ENCODE measurements at regions of chrX and their contacts with region 1.

Region 1: DNA sequence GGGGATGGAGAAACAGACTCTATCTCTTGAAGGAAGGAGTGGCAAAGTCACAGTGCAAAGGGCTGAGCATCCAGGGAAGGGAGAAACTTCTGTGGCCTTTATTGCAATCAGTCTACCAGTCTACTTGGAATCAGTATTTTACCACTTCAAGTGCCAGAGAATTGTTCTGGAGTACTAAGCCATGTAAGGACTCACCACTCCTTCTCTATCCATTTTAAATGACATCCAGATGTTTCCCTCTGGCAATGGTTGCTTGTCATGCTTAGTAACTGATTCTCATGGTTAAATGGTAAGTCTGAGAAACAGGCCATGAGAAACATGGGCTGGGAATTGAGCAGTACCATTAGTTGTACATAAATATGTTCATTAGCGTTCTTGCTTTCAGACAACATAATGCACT is 21.1 kb upstream of the SMIM10 start:
- DNase-seq: no peak
- ATAC-seq: no peak
- H3K4me3 ChIP-seq: no peak overlapping the region
- H3K27ac ChIP-seq: no peak overlapping the region
- H3K4me1 ChIP-seq: no peaks in the 10 kb centered on the region
- H3K27me3 ChIP-seq: no peaks in the 10 kb centered on the region
- CTCF ChIP-seq: no peak

Region 2: GRCh38 chrX:134898440-134898839 is 71.3 kb before region 1 on chrX:
- CTCF ChIA-PET with region 1: no interaction called
- POLR2A ChIA-PET with region 1: no interaction called
- intact Hi-C with region 1: no loop called
- DNase-seq: peak; percentile 3
- ATAC-seq: no peak
- H3K4me3 ChIP-seq: no peak overlapping the region
- H3K27ac ChIP-seq: no peak overlapping the region
- H3K4me1 ChIP-seq: peaks cover 9% of the 10 kb centered on the region
- H3K27me3 ChIP-seq: no peaks in the 10 kb centered on the region
- CTCF ChIP-seq: no peak

Region 3: GRCh38 chrX:135003876-135004623 is 34.3 kb after region 1 on chrX:
- CTCF ChIA-PET with region 1: no interaction called
- POLR2A ChIA-PET with region 1: no interaction called
- intact Hi-C with region 1: loop called (anchors 2 kb)
- DNase-seq: peak; percentile 93
- ATAC-seq: peak; percentile 80
- H3K4me3 ChIP-seq: peak overlapping the region; percentile 69
- H3K27ac ChIP-seq: 0 out of 2 replicates have a peak overlapping the region, but pooled peaks have one; percentile 4
- H3K4me1 ChIP-seq: peaks cover 30% of the 10 kb centered on the region
- H3K27me3 ChIP-seq: no peaks in the 10 kb centered on the region
- CTCF ChIP-seq: no peak

Region 4: DNA sequence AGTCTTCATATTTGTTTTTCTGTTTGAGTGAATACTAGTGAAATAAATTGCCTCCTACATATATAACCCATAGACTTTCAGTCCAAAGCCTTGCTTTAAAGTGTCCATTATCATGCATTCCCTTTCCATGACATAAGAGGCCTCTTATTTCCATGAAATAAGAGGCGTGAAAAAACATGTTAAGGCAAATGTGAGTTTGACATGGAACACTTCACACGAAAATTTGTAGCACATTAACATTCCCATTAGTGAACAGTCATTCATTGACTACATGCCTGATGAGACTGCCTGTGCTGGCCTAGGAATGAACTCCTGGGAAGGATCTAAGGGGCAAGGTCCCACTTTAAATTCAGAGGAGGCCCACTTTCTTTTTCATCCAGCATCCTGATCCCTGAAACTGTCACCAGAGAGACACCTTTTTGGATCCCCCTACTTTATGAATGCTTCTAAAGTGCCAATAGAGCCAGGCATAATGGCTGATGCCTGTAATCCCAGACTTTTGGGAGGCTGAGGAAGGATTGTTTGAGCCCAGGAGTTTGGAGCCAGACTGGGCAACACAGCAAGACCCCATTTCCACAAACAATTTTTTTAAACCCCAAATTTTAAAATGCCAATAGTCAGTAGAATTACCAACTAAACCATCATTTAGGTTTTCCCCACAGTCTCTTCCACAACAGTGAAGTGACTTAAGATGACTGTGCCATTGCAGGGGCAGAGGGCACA is 46.0 kb after region 1 on chrX:
- CTCF ChIA-PET with region 1: no interaction called
- POLR2A ChIA-PET with region 1: interaction called, 11 read pairs
- intact Hi-C with region 1: no loop called
- DNase-seq: no peak
- ATAC-seq: no peak
- H3K4me3 ChIP-seq: no peak overlapping the region
- H3K27ac ChIP-seq: no peak overlapping the region
- H3K4me1 ChIP-seq: peaks cover 5% of the 10 kb centered on the region
- H3K27me3 ChIP-seq: no peaks in the 10 kb centered on the region
- CTCF ChIP-seq: no peak

Region 5: DNA sequence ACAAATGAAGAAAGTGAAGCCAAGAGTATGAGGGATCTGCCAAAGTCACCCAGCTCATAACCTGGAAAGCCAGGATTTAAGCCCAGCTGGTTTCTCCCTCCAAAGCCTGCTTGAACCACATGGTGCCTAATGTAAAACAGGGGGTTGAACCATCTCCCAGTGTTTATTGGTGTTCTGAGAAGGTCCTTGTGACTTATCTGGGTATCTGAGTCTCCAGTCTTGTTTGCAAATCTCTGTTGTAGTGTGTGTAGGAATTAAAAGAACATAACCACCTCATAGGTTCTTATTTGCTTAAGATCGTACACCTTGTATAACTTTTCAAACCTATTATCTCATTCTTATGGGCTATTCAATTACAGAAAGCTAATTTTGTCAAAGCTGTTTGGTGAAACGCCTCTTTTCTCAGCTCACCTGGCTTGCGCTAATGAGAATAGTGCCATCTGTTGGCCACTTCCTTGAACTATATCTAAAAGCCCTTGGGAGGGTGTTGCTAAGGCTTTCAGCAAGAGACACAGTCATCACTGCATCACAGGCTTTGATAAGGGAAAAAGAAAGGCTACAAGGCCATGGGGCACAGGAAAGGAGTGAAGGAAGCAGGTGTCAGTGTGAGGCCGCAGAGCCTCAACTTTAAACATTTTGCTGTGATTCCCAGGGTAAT is 116.6 kb after region 1 on chrX:
- CTCF ChIA-PET with region 1: no interaction called
- POLR2A ChIA-PET with region 1: no interaction called
- intact Hi-C with region 1: loop called (anchors 1 kb)
- DNase-seq: peak; percentile 84
- ATAC-seq: peak; percentile 93
- H3K4me3 ChIP-seq: no peak overlapping the region
- H3K27ac ChIP-seq: no peak overlapping the region
- H3K4me1 ChIP-seq: no peaks in the 10 kb centered on the region
- H3K27me3 ChIP-seq: no peaks in the 10 kb centered on the region
- CTCF ChIP-seq: peak; percentile 77

Measured in PC-3 (cell line).